AG04449 (cell line): ENCODE measurements at regions of chr2 and their contacts with region 1.

Region 1: GRCh38 chr2:208040199-208041171 is 15.2 kb upstream of the PLEKHM3 start:
- DNase-seq: no peak
- H3K4me3 ChIP-seq: no peak overlapping the region
- CTCF ChIP-seq: peak; percentile 77

Region 2: GRCh38 chr2:206241736-206242135 is 1798.7 kb before region 1 on chr2:
- CTCF ChIA-PET with region 1: no interaction called
- POLR2A ChIA-PET with region 1: no interaction called
- DNase-seq: no peak
- H3K4me3 ChIP-seq: no peak overlapping the region
- CTCF ChIP-seq: no peak

Region 3: DNA sequence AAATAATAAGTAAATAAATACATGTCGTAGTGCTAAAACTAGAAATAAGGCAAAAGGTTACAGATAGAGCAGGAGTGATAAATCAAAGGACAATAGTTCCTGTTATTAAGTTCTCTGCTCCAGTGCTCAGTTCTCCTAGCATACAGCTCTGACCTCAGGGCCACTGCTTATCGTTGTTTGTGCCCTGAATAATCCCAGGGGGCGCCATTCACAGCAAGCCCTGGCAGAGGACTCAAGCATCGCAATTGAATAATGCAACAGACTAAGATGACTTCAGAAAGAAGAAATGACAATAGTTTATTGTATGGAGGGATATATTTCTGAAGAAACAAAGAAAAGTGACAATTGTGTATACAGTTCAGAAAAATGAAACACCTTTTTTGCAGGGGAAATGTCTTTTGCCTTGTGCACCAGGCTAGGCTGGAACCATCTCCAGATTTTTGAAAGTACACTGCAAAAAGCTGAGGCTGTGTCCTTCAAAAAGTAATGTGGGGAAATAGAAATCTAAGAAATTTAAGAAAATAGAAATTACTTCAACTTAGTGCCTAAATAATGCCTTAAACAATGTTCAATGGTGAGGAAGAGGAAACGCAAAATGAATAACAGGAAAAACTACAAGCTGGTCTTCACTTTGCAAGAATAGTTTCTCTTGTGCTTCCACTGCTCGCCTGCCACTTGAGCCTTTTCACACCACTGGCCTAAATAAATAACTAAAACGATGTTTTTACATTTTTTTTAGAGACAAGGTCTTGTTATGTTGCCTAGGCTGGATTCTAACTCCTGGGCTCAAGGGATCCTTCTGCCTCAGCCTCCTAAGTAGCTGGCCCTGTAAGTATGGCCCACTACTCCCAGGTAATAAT is 348.0 kb before region 1 on chr2:
- CTCF ChIA-PET with region 1: no interaction called
- POLR2A ChIA-PET with region 1: no interaction called
- DNase-seq: no peak
- H3K4me3 ChIP-seq: no peak overlapping the region
- CTCF ChIP-seq: peak; percentile 33

Region 4: GRCh38 chr2:207734264-207734635 is 306.2 kb before region 1 on chr2:
- CTCF ChIA-PET with region 1: interaction called, 25 read pairs
- POLR2A ChIA-PET with region 1: no interaction called
- DNase-seq: no peak
- H3K4me3 ChIP-seq: no peak overlapping the region
- CTCF ChIP-seq: peak; percentile 67

Region 5: DNA sequence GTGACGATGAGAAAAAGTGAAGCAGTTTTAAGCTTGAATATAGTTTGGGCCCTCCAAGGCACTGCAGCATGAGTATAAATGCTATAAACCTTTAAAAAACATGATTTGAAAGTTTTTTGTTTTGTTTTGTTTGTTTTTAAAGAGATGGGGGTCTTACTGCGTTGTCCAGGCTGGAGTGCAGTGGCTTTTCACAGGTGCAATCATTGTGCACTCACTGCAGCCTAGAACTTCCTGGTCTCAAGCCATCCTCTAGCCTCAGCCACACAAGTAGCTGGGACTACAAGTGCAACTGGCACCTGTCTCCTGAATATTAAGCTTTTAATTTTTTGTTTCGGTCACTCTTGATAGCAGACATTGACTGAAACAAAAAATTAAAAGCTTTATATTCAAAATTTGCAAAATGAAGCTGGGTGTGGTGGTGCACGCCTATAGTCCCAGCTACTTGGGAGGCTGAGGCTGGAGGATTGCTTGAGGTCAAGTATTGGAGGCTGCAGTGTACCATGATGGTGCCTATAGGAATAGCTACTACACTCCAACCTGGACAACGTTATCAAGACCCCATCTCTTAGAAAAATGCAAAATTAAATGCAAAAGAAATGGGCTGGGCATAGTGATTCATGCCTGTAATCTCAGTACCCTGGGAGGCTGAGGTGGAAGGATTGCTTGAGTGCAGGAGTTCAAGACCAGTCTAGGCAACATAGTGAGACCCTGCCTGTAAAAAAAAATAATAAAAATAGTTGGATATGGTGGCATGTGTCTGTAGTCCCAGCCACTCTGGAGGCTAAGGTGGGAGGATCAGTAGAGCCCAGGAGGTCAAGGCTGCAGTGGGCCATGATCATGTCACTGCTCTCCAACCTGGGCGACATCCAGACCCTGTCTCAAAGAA is 285.7 kb before region 1 on chr2:
- CTCF ChIA-PET with region 1: interaction called, 252 read pairs
- POLR2A ChIA-PET with region 1: no interaction called
- DNase-seq: no peak
- H3K4me3 ChIP-seq: no peak overlapping the region
- CTCF ChIP-seq: no peak

Region 6: DNA sequence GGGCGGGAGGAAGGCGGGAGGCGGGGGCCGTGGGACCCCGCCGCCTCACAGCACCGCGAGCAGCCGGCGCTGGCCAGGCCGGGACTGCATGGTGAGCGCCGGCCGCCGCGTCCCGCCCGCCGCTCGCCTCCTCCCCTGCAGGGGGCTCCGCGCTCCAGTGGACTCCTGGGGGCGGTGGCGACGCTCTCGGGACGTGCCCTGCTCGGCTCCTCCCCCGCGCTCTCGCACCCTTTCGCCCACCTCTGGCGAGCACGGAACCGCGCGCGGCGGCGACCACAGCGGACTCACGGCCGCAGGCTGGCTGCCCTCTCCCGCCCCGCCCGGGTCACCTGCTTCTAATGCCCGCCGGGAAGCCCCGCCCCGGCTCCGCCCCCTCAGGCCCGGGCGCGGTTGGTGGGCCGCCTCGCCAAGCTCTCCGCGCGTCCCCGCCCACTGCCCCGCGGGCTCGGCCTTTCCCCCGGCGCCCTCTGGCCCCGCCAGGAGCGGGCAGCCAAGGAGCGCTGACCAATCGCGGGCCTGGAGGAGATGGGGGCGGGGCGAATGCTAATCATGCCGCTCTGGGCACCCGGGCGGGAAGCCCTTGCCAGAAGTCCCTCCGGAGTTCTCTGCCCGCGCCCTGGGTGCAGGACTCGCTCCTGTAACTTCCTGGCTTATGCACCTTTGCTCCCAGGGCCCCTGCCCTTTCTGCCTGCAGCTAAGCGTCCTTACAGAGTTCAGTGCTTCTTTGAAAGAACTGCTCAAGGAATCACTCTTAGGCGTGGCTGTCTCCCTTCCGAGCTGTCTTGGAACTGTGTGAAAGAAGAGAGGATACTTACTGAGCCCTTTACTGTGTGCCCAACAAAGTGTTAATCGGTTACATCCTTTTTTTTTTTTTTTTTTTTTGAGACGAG is 270.6 kb before region 1 on chr2 and contains the start of gene FZD5:
- CTCF ChIA-PET with region 1: interaction called, 23 read pairs
- POLR2A ChIA-PET with region 1: no interaction called
- DNase-seq: no peak
- H3K4me3 ChIP-seq: peak within 1 kb of the TSS; percentile 69
- CTCF ChIP-seq: peak; percentile 75

Region 7: GRCh38 chr2:207995887-207996286 is 44.6 kb before region 1 on chr2:
- CTCF ChIA-PET with region 1: interaction called, 19 read pairs
- POLR2A ChIA-PET with region 1: no interaction called
- DNase-seq: no peak
- H3K4me3 ChIP-seq: no peak overlapping the region
- CTCF ChIP-seq: no peak

Region 8: GRCh38 chr2:208025037-208025813 is 15.3 kb before region 1 on chr2 and contains the start of gene PLEKHM3:
- CTCF ChIA-PET with region 1: interaction called, 106 read pairs
- POLR2A ChIA-PET with region 1: interaction called, 10 read pairs
- DNase-seq: peak; percentile 38
- H3K4me3 ChIP-seq: peak within 1 kb of the TSS; percentile 81
- CTCF ChIP-seq: no peak

Region 9: GRCh38 chr2:208072250-208072892 is 31.9 kb after region 1 on chr2:
- CTCF ChIA-PET with region 1: interaction called, 28 read pairs
- POLR2A ChIA-PET with region 1: no interaction called
- DNase-seq: no peak
- H3K4me3 ChIP-seq: no peak overlapping the region
- CTCF ChIP-seq: peak; percentile 77

Region 10: GRCh38 chr2:208189810-208190503 is 149.5 kb after region 1 on chr2 and contains the start of gene C2orf80:
- CTCF ChIA-PET with region 1: no interaction called
- POLR2A ChIA-PET with region 1: no interaction called
- DNase-seq: no peak
- H3K4me3 ChIP-seq: no peak within 1 kb of the TSS
- CTCF ChIP-seq: no peak